ENCODE measurements at regions of chr1 and their contacts with region 1.

Region 1: DNA sequence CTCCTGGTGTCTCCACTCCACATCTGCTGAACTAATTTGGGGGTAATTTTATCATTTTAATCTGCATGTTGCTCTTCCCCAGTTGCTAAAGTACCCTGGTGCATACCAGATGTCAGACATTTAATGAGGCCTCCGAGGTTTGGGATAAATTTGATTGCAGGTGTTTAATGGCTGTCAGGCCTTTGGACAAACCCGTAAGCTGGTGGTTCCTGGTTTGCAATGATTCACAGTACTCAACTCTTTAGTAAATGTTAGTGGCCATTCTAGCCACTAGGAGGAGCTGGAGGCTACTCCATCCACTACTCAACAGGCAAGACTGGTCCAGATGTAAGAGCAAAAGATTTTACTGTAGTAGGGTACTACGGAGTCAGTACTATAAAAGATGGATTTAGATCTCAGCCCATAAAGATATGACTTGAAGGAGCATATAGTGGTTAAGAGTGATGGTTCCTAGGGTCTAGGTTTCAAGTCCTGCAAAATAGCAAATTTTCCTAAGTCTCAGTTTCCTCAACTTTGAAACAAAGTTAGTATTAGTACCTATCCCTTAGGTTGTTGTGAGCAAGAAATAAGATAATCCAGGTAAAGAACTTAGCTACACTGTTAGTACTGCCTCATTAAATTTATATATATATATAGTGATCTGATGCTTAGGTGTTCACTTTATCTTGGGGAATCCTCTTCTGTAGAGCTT is 132.8 kb downstream of the SNX7 start:
- DNase-seq: peak in 8 of 9 donors; percentile 23 to 78 (median 66)
- ATAC-seq: peak; percentile 89
- H3K4me3 ChIP-seq: no peak overlapping the region
- H3K4me3 Mint-ChIP-seq: no peak overlapping the region
- H3K27ac ChIP-seq: no peak overlapping the region
- H3K27ac Mint-ChIP-seq: peak overlapping the region in 2 of 9 donors; percentile 60 to 65
- H3K4me1 ChIP-seq: peaks cover 6 to 20% of the 10 kb centered on the region in 2 donors
- H3K4me1 Mint-ChIP-seq: peaks cover 20 to 44% (median 30%) of the 10 kb centered on the region in 7 donors
- H3K27me3 ChIP-seq: no peaks in the 10 kb centered on the region
- H3K27me3 Mint-ChIP-seq: peaks cover 0 to 12% (median 0%) of the 10 kb centered on the region in 5 donors

Region 2: GRCh38 chr1:98277118-98277517 is 517.2 kb before region 1 on chr1:
- CTCF ChIA-PET with region 1: no interaction called
- POLR2A ChIA-PET with region 1: no interaction called
- intact Hi-C with region 1: no loop called
- DNase-seq: no peak
- ATAC-seq: no peak
- H3K4me3 ChIP-seq: no peak overlapping the region
- H3K4me3 Mint-ChIP-seq: no peak overlapping the region
- H3K27ac ChIP-seq: no peak overlapping the region
- H3K27ac Mint-ChIP-seq: no peak overlapping the region
- H3K4me1 ChIP-seq: no peaks in the 10 kb centered on the region
- H3K4me1 Mint-ChIP-seq: no peaks in the 10 kb centered on the region
- H3K27me3 ChIP-seq: no peaks in the 10 kb centered on the region
- H3K27me3 Mint-ChIP-seq: no peaks in the 10 kb centered on the region

Region 3: DNA sequence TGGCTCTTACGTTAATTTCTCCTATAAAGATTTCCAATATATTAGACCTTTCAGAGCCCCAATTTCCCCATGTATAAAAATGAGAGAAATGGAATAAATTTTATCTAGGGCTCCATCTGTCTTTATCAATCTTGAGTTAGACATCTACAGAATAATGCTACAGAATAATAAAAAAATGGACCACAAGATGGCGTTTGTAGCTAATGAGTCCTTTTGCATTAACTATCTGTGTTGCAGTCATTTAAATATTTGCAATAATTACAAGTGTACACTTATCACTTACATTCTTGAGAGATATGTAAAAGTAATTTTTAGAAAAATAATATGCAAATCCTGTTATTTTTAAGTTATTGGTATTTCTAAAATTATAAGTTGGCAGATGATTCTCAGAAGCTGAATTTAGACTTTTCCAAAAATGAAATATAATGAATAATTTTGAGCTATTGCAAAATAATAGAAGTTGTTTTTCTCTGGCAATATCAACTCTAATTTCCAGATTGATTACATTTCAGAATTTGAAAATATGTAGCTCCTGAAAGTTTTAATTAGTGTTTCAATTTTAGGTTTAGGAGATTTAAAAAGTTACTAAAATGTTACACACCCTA is 45.1 kb before region 1 on chr1:
- CTCF ChIA-PET with region 1: interaction called, 3 read pairs
- POLR2A ChIA-PET with region 1: no interaction called
- intact Hi-C with region 1: loop called in 1 of 2 experiments (anchors 1 kb)
- DNase-seq: peak in 5 of 9 donors; percentile 9 to 26 (median 16)
- ATAC-seq: no peak
- H3K4me3 ChIP-seq: no peak overlapping the region
- H3K4me3 Mint-ChIP-seq: no peak overlapping the region
- H3K27ac ChIP-seq: no peak overlapping the region
- H3K27ac Mint-ChIP-seq: no peak overlapping the region
- H3K4me1 ChIP-seq: no peaks in the 10 kb centered on the region
- H3K4me1 Mint-ChIP-seq: peaks cover 0 to 5% (median 0%) of the 10 kb centered on the region in 7 donors
- H3K27me3 ChIP-seq: no peaks in the 10 kb centered on the region
- H3K27me3 Mint-ChIP-seq: peaks cover 0 to 7% (median 0%) of the 10 kb centered on the region in 5 donors

Region 4: DNA sequence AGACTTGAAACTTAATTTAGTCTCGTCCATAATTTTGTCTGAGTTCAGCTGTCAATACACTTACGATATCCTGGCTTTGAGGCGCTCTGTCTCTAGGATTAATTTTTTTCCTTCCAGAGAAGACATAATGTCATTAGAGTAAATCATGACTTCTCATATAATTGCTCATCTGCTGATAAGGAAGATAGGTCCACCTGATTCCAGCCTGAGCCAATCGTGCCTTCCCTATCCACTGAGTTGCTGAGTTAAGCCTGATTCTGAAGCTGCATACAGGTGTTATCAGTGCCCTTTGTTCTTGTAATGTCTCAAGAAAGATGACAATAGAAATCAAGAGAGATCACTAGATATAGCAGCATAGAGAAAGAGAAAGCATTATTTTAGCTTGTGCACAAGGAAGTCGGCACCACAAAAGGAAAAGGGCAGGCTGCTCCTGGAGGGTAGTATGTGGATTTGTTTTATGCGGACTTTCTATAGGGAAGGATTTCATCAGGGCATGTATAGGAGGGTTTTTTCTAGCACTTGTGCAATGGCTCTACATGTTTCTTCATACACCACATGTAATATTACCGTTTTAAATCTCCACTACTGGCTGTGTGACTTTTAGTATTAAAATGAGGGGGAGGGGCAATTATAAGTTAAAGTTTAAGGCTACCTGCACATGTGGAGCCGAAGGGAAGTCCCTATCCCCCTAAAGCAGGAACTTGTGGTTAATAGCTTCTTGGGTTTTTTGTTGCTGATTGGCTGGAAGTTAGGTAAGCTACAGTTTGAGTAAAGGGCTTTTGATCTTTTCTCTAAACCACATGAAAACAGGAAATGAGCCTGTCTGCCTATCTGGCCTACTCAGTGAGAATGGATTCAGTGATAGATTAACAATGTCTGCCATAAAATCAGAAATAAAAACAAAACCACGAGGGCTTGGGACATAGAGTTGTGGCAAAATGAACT is 76.9 kb after region 1 on chr1:
- CTCF ChIA-PET with region 1: interaction called, 4 read pairs
- POLR2A ChIA-PET with region 1: interaction called, 13 read pairs
- intact Hi-C with region 1: loop called (anchors 1 to 2 kb)
- DNase-seq: peak in 8 of 9 donors; percentile 27 to 96 (median 92)
- ATAC-seq: peak; percentile 96
- H3K4me3 ChIP-seq: peak overlapping the region; percentile 56
- H3K4me3 Mint-ChIP-seq: peak overlapping the region; percentile 74 to 91 (median 86)
- H3K27ac ChIP-seq: peak overlapping the region; percentile 83
- H3K27ac Mint-ChIP-seq: peak overlapping the region; percentile 88 to 97 (median 93)
- H3K4me1 ChIP-seq: peaks cover 18 to 24% of the 10 kb centered on the region in 2 donors
- H3K4me1 Mint-ChIP-seq: peaks cover 21 to 66% (median 47%) of the 10 kb centered on the region in 7 donors
- H3K27me3 ChIP-seq: no peaks in the 10 kb centered on the region
- H3K27me3 Mint-ChIP-seq: no peaks in the 10 kb centered on the region

Region 5: DNA sequence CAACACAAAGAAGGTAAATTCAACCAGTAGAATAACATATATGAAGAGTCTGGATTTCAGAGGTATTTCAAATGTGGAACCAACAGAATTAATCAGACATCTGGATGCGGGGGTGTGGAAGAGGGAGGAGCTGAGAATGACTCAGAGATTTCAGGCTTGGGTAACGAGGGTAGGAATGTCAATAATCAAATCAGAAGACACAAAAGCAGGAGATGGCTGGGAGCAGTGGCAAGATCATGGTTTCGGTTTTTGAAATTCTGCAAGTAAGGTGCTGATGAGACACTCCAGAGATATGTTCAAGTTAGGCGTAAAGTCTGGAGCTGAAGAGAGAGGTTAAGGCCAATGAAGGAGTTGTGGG is 146.4 kb after region 1 on chr1:
- CTCF ChIA-PET with region 1: interaction called, 10 read pairs
- POLR2A ChIA-PET with region 1: no interaction called
- intact Hi-C with region 1: loop called (anchors 1 to 5 kb)
- DNase-seq: no peak
- ATAC-seq: no peak
- H3K4me3 ChIP-seq: no peak overlapping the region
- H3K4me3 Mint-ChIP-seq: no peak overlapping the region
- H3K27ac ChIP-seq: no peak overlapping the region
- H3K27ac Mint-ChIP-seq: no peak overlapping the region
- H3K4me1 ChIP-seq: no peaks in the 10 kb centered on the region
- H3K4me1 Mint-ChIP-seq: peaks cover 0 to 5% (median 2%) of the 10 kb centered on the region in 7 donors
- H3K27me3 ChIP-seq: no peaks in the 10 kb centered on the region
- H3K27me3 Mint-ChIP-seq: no peaks in the 10 kb centered on the region

Region 6: DNA sequence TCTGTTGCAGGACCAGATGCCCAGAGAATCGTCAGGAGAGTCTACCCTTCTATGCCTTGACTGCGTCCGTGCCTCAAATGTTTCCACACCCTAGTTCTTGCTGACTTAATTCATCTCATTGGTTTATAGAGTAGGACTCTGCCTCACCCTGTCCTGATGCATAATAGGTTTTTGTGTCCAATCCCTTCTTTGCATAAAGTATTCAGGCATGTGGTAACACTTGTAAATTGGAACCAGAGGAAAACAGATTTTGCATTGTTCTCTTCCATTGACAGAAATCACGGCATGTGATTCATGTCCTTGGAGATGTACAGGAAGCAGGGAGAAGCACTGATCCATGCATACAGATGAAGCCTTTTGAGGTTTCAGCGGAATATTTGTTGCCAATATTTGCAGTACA is 180.8 kb after region 1 on chr1:
- CTCF ChIA-PET with region 1: no interaction called
- POLR2A ChIA-PET with region 1: no interaction called
- intact Hi-C with region 1: no loop called
- DNase-seq: no peak
- ATAC-seq: no peak
- H3K4me3 ChIP-seq: no peak overlapping the region
- H3K4me3 Mint-ChIP-seq: no peak overlapping the region
- H3K27ac ChIP-seq: no peak overlapping the region
- H3K27ac Mint-ChIP-seq: no peak overlapping the region
- H3K4me1 ChIP-seq: no peaks in the 10 kb centered on the region
- H3K4me1 Mint-ChIP-seq: peaks cover 0 to 3% (median 0%) of the 10 kb centered on the region in 7 donors
- H3K27me3 ChIP-seq: no peaks in the 10 kb centered on the region
- H3K27me3 Mint-ChIP-seq: peaks cover 0 to 8% (median 0%) of the 10 kb centered on the region in 5 donors

Region 7: GRCh38 chr1:99004254-99004859 is 210.0 kb after region 1 on chr1:
- CTCF ChIA-PET with region 1: interaction called, 10 read pairs
- POLR2A ChIA-PET with region 1: no interaction called
- intact Hi-C with region 1: loop called in 1 of 2 experiments (anchors 2 kb)
- DNase-seq: peak in 8 of 9 donors; percentile 7 to 33 (median 20)
- ATAC-seq: peak; percentile 62
- H3K4me3 ChIP-seq: peak overlapping the region; percentile 36
- H3K4me3 Mint-ChIP-seq: peak overlapping the region; percentile 50 to 86 (median 72)
- H3K27ac ChIP-seq: no peak overlapping the region
- H3K27ac Mint-ChIP-seq: no peak overlapping the region
- H3K4me1 ChIP-seq: peaks cover 0 to 4% of the 10 kb centered on the region in 2 donors
- H3K4me1 Mint-ChIP-seq: peaks cover 0 to 16% (median 6%) of the 10 kb centered on the region in 7 donors
- H3K27me3 ChIP-seq: peaks cover 6 to 12% of the 10 kb centered on the region in 2 donors
- H3K27me3 Mint-ChIP-seq: peaks cover 46 to 72% (median 57%) of the 10 kb centered on the region in 5 donors

Region 8: DNA sequence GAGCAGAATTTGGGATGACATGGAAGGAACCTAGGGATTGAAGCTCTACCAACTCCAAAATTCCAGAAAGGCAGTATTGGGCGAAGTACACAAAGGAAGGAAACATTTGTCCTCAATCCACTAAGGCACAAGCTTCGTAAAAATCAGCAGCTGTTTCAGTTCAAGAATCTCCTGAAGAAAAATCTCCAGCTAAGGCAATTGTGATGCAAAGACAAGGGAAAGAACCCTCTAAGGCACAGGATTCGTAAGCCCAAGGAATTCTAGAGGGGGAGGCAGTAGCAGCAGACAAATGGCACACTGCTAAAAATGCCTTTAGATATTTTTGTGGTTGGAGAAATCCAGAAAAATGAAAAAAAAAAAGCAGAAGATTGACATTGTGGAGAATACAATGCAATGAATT is 274.8 kb after region 1 on chr1:
- CTCF ChIA-PET with region 1: no interaction called
- POLR2A ChIA-PET with region 1: no interaction called
- intact Hi-C with region 1: no loop called
- DNase-seq: no peak
- ATAC-seq: no peak
- H3K4me3 ChIP-seq: no peak overlapping the region
- H3K4me3 Mint-ChIP-seq: no peak overlapping the region
- H3K27ac ChIP-seq: no peak overlapping the region
- H3K27ac Mint-ChIP-seq: no peak overlapping the region
- H3K4me1 ChIP-seq: no peaks in the 10 kb centered on the region
- H3K4me1 Mint-ChIP-seq: no peaks in the 10 kb centered on the region
- H3K27me3 ChIP-seq: no peaks in the 10 kb centered on the region
- H3K27me3 Mint-ChIP-seq: peaks cover 0 to 9% (median 2%) of the 10 kb centered on the region in 5 donors

Region 9: GRCh38 chr1:99481391-99481996 is 687.2 kb after region 1 on chr1:
- CTCF ChIA-PET with region 1: interaction called, 33 read pairs
- POLR2A ChIA-PET with region 1: no interaction called
- intact Hi-C with region 1: loop called in 1 of 2 experiments (anchors 2 kb)
- DNase-seq: peak in 7 of 9 donors; percentile 6 to 61 (median 47)
- ATAC-seq: peak; percentile 59
- H3K4me3 ChIP-seq: no peak overlapping the region
- H3K4me3 Mint-ChIP-seq: no peak overlapping the region
- H3K27ac ChIP-seq: no peak overlapping the region
- H3K27ac Mint-ChIP-seq: no peak overlapping the region
- H3K4me1 ChIP-seq: no peaks in the 10 kb centered on the region
- H3K4me1 Mint-ChIP-seq: no peaks in the 10 kb centered on the region
- H3K27me3 ChIP-seq: no peaks in the 10 kb centered on the region
- H3K27me3 Mint-ChIP-seq: peaks cover 8 to 35% (median 17%) of the 10 kb centered on the region in 5 donors

Region 10: DNA sequence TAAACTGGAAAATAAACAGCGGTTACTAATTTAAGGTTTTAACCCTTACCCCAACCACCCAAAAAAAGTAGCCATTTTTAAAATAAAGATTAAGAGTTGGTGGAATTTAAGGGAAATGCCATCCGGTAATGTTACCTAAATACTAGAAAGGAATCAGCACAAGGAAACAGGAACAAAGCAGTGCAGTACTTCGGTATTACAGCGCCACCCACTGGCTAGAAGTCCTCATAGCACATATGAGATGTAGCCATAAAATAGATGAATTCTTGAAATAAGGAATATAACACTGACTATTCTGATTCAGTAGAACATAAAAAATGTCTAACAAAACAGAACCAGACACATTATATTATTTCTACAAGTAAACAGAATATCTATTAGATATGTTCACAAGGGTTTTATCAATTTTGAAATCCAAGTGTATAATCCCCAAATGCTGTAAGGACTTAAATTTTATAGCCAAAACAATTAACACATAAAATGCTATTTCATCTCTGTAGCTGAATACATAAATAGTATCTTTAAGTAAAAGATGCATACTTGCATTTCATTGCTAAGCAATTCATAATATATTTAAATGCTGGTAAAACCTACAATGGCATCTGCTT is 913.3 kb after region 1 on chr1:
- CTCF ChIA-PET with region 1: no interaction called
- POLR2A ChIA-PET with region 1: no interaction called
- intact Hi-C with region 1: loop called (anchors 1 to 5 kb)
- DNase-seq: peak in 6 of 9 donors; percentile 7 to 46 (median 16)
- ATAC-seq: peak; percentile 75
- H3K4me3 ChIP-seq: no peak overlapping the region
- H3K4me3 Mint-ChIP-seq: no peak overlapping the region
- H3K27ac ChIP-seq: no peak overlapping the region
- H3K27ac Mint-ChIP-seq: no peak overlapping the region
- H3K4me1 ChIP-seq: peaks cover 0 to 7% of the 10 kb centered on the region in 2 donors
- H3K4me1 Mint-ChIP-seq: peaks cover 5 to 22% (median 10%) of the 10 kb centered on the region in 7 donors
- H3K27me3 ChIP-seq: no peaks in the 10 kb centered on the region
- H3K27me3 Mint-ChIP-seq: peaks cover 0 to 3% (median 0%) of the 10 kb centered on the region in 5 donors

Measured in naive thymus-derived CD4-positive, alpha-beta T cell (primary cell).